Caco-2 (cell line): ENCODE measurements at regions of chr2 and their contacts with region 1.

Region 1: GRCh38 chr2:138035631-138036105 is 71.4 kb downstream of the HNMT start:
- DNase-seq: peak; percentile 48 to 54
- H3K4me3 ChIP-seq: no peak overlapping the region
- H3K4me3 Mint-ChIP-seq: peak overlapping the region; percentile 12
- H3K27ac Mint-ChIP-seq: peak overlapping the region; percentile 79
- H3K4me1 ChIP-seq: peaks cover 42% of the 10 kb centered on the region
- H3K4me1 Mint-ChIP-seq: peaks cover 30% of the 10 kb centered on the region
- H3K27me3 ChIP-seq: no peaks in the 10 kb centered on the region
- H3K27me3 Mint-ChIP-seq: no peaks in the 10 kb centered on the region
- CTCF ChIP-seq: no peak

Region 2: DNA sequence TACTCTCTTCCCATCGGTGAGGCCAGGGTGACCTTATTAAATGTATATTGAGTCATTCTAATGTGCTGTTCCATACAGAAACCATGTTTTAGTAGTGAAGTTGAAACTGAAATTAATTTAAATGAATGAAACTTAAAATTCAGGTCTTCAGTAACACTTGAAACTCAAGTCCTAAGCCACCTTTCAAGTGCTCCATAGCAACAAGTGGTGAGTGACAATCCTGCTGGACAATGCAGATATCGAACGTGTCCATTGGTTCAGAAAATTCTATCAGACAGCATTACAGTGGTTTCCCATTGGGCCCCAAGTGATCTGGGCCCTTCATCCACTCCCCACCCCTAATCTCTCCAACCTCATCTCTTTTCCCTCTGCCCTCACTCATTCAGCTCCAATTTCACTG is 22.7 kb before region 1 on chr2:
- CTCF ChIA-PET with region 1: no interaction called
- POLR2A ChIA-PET with region 1: no interaction called
- intact Hi-C with region 1: loop called (anchors 1 kb)
- DNase-seq: no peak
- H3K4me3 ChIP-seq: no peak overlapping the region
- H3K4me3 Mint-ChIP-seq: no peak overlapping the region
- H3K27ac Mint-ChIP-seq: no peak overlapping the region
- H3K4me1 ChIP-seq: no peaks in the 10 kb centered on the region
- H3K4me1 Mint-ChIP-seq: no peaks in the 10 kb centered on the region
- H3K27me3 ChIP-seq: no peaks in the 10 kb centered on the region
- H3K27me3 Mint-ChIP-seq: no peaks in the 10 kb centered on the region
- CTCF ChIP-seq: no peak

Region 3: DNA sequence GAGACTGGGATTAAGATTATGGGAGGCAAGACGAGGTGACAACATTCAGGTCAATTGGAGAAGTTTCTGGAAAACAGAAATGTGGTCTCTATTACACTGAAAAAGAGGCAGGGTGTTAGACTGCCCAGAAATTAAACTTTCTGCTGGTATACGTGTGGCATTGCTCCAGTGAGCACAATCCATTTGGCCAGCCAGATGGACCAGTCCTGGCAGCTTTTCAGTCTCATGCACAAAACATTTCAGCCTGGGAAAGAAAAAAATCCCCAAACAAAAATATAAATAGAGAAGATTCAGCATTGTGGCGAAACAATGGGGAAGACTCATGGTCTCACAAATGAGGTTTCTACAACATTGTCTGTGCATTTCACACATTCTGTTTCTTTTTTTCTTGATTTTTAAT is 42.5 kb after region 1 on chr2:
- CTCF ChIA-PET with region 1: no interaction called
- POLR2A ChIA-PET with region 1: no interaction called
- intact Hi-C with region 1: loop called (anchors 2 kb)
- DNase-seq: no peak
- H3K4me3 ChIP-seq: no peak overlapping the region
- H3K4me3 Mint-ChIP-seq: no peak overlapping the region
- H3K27ac Mint-ChIP-seq: no peak overlapping the region
- H3K4me1 ChIP-seq: no peaks in the 10 kb centered on the region
- H3K4me1 Mint-ChIP-seq: no peaks in the 10 kb centered on the region
- H3K27me3 ChIP-seq: no peaks in the 10 kb centered on the region
- H3K27me3 Mint-ChIP-seq: no peaks in the 10 kb centered on the region
- CTCF ChIP-seq: no peak

Region 4: GRCh38 chr2:138157372-138157771 is 121.7 kb after region 1 on chr2:
- CTCF ChIA-PET with region 1: no interaction called
- POLR2A ChIA-PET with region 1: no interaction called
- intact Hi-C with region 1: no loop called
- DNase-seq: no peak
- H3K4me3 ChIP-seq: no peak overlapping the region
- H3K4me3 Mint-ChIP-seq: no peak overlapping the region
- H3K27ac Mint-ChIP-seq: no peak overlapping the region
- H3K4me1 ChIP-seq: peaks cover 17% of the 10 kb centered on the region
- H3K4me1 Mint-ChIP-seq: peaks cover 9% of the 10 kb centered on the region
- H3K27me3 ChIP-seq: no peaks in the 10 kb centered on the region
- H3K27me3 Mint-ChIP-seq: no peaks in the 10 kb centered on the region
- CTCF ChIP-seq: no peak